ENCODE measurements at regions of chr17 and their contacts with region 1.

Region 1: DNA sequence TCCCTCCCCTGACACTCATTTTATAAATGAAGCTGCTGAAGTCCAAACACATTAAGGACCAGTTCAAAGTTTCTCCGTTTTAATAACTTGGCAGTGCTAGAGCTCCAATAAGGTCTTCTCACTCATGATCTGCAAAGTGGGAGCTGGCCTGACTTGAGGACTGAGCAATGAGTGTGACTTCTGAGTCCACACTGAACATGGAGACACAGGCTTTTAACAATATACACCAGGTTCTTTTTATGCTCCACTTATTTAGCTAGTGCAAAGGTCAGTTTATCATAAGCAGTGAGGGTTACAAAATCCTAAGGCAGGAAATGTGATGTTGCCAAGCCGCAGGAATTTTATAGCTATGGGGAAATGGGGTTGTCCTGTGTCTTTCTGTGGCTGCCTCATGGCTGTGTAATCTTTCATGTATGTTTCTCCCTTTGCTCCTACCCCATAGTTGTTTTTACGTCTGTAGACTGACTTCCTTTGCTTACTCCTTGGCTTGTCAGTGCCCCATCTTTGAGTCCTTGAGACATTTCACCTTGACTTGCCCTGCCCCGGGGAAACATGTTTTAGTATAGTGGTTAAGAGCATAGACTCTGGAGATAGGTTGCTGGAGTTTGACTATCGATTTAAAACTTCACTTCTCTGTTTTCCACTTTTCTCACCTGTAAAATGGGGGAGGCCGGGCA is 12.1 kb upstream of the MMD start:
- DNase-seq: peak; percentile 64 to 68
- H3K4me3 ChIP-seq: no peak overlapping the region
- H3K4me3 Mint-ChIP-seq: peak overlapping the region; percentile 58
- H3K27ac Mint-ChIP-seq: peak overlapping the region; percentile 94
- H3K4me1 ChIP-seq: peaks cover 48% of the 10 kb centered on the region
- H3K4me1 Mint-ChIP-seq: peaks cover 51% of the 10 kb centered on the region
- H3K27me3 ChIP-seq: no peaks in the 10 kb centered on the region
- H3K27me3 Mint-ChIP-seq: no peaks in the 10 kb centered on the region
- CTCF ChIP-seq: no peak

Region 2: GRCh38 chr17:55421179-55421934 is 12.4 kb before region 1 on chr17 and contains the start of gene MMD:
- CTCF ChIA-PET with region 1: no interaction called
- POLR2A ChIA-PET with region 1: interaction called, 5 read pairs
- intact Hi-C with region 1: loop called (anchors 1 kb)
- DNase-seq: peak in 1 of 2 experiments; percentile 46
- H3K4me3 ChIP-seq: peak within 1 kb of the TSS; percentile 78
- H3K4me3 Mint-ChIP-seq: peak within 1 kb of the TSS; percentile 90
- H3K27ac Mint-ChIP-seq: peak within 1 kb of the TSS; percentile 81
- H3K4me1 ChIP-seq: peaks cover 19% of the 10 kb centered on the region
- H3K4me1 Mint-ChIP-seq: peaks cover 64% of the 10 kb centered on the region
- H3K27me3 ChIP-seq: no peaks in the 10 kb centered on the region
- H3K27me3 Mint-ChIP-seq: no peaks in the 10 kb centered on the region
- CTCF ChIP-seq: no peak
- total RNA-seq, gene MMD: 38.6 and 39.0 TPM in 2 replicates

Region 3: DNA sequence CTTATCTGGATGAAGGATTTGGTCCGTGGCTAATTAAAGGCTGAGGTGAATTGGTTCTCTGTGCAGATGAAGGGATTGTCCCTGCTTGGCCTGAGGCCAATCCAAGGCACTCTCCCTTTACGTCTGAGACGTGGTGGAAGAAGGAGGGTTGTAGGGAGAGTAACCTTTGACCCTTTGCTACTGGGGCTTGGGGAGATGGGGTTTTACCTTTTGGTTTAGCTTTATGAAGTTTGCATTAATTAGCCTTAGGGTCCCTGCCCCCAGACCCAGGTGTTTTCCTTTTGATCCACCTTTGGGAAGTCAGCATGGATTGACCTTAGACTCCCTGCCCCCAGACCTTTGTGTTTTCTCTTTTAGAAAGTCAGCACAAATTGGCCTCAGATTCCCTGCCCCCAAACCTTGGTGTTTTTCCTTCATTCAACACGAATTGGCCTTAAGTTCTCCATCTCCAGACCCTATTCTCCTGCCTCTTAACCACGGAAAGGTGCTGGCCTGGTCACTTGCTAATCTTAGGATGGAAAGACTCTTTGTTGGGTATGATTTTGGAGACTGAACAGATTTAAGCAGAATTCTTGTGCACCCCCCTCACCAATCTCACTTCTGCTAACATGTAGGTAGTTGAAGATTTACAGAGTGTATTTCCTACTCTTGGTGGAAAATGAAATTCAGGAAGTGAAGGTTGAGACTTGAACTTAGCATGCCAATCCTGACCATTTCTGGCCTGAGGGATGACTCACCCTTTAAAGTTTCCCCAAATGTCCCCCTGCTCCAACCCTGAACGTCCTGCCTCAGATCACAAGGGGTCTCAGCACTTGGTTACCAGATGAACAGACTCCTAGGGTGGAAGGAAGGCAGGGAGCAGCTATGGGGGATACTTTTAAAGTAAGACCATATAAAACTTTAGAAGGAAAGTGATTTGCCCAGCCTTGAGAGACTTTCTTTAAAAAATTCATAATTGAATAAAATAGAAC is 11.0 kb after region 1 on chr17:
- CTCF ChIA-PET with region 1: interaction called, 9 read pairs
- POLR2A ChIA-PET with region 1: interaction called, 16 read pairs
- intact Hi-C with region 1: loop called (anchors 1 kb)
- DNase-seq: peak; percentile 47 to 56
- H3K4me3 ChIP-seq: no peak overlapping the region
- H3K4me3 Mint-ChIP-seq: no peak overlapping the region
- H3K27ac Mint-ChIP-seq: peak overlapping the region; percentile 60
- H3K4me1 ChIP-seq: peaks cover 68% of the 10 kb centered on the region
- H3K4me1 Mint-ChIP-seq: peaks cover 42% of the 10 kb centered on the region
- H3K27me3 ChIP-seq: no peaks in the 10 kb centered on the region
- H3K27me3 Mint-ChIP-seq: no peaks in the 10 kb centered on the region
- CTCF ChIP-seq: no peak

Region 4: DNA sequence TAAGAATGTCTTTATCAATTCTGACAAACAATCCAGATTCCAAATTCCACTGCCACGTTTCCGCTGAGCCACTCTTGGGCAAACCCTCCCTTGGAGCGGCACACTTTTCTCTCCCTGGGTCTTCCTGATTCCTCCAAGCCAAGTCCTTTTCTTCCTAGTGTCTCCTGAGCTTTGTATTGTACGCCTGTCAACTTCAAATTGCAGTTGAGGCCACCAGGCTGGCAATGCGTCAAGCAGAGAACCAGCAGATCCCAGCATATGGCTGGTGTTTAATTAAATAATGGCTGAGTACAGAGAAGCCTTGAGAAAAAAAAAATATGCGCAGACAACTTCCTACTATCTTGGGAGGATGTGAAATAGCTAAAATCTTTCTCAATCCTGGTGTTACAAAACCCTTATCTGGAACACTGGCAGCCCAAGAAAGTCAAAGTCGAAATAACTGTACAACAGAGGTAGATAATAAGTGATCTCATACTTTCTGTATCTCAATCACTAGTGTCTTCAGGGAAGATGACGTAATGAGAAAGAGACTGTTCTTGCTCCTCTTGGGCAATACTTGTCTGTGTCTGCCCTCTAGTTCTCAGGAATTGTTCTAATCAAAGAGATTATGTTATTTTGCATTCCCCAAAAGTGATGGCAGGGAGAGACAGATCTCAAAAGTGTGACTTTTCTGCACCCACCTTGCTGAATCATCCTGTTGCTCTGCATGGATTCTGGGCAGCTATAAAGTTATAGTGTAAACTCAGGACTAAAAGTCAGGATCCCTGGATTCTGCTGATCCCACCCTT is 62.5 kb after region 1 on chr17:
- CTCF ChIA-PET with region 1: no interaction called
- POLR2A ChIA-PET with region 1: no interaction called
- intact Hi-C with region 1: loop called (anchors 1 kb)
- DNase-seq: peak; percentile 56 to 63
- H3K4me3 ChIP-seq: no peak overlapping the region
- H3K4me3 Mint-ChIP-seq: peak overlapping the region; percentile 49
- H3K27ac Mint-ChIP-seq: peak overlapping the region; percentile 68
- H3K4me1 ChIP-seq: peaks cover 20% of the 10 kb centered on the region
- H3K4me1 Mint-ChIP-seq: peaks cover 20% of the 10 kb centered on the region
- H3K27me3 ChIP-seq: no peaks in the 10 kb centered on the region
- H3K27me3 Mint-ChIP-seq: no peaks in the 10 kb centered on the region
- CTCF ChIP-seq: no peak

Measured in Caco-2 (cell line).